Right lobe of liver (tissue), 6 donors: ENCODE measurements at regions of chr5 and their contacts with region 1.

Region 1: GRCh38 chr5:150523472-150524350 is 15.8 kb downstream of the NDST1 start:
- DNase-seq: peak in 1 of 3 donors; percentile 54
- ATAC-seq: peak; percentile 7 to 42 (median 11)
- H3K4me3 ChIP-seq: no peak overlapping the region
- H3K27ac ChIP-seq: peak overlapping the region; percentile 57 to 93 (median 58)
- H3K4me1 ChIP-seq: peaks cover 0 to 84% (median 51%) of the 10 kb centered on the region in 4 donors
- H3K27me3 ChIP-seq: no peaks in the 10 kb centered on the region
- CTCF ChIP-seq: peak; percentile 46 to 63 (median 52)
- POLR2A ChIP-seq: no peak

Region 2: DNA sequence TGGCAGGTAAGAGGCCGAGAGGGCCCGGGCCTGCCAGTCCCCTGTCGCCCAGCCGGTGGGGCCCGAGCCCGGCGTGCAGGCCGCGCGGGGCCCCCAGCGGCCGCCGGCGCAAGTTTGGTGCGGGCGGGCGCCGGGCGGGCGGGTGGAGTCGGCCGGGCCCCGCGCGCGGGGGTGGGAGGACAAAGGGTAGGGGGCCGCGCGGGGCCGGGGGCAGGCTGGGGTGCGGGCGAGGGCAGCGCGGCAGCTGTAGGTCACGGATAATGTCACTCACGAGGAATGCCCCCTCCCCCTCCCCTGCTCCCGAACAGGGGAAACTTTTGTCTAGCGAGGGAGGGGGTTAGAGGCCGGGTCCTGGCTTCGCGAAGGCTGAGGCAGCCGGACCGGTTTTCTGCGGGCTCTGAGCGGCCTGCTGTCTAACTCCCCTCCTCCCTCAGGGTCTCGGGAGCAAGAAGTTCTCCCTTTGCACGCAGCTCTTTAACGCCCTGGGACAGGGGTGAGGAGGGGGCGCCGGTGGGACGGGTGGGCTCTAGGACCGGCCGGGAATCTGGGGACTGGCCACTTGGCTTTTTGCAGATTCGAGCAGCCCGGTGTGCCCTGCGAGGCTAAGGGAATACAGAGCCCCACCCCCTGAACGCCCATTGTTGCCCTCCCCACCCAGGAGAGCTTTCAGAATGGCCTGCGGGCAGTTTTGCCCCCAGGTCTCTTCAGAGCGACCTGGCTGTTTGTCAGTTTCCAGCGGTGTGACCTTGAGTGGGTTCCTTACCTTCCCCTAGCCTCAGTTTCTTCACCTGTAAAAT is 37.1 kb before region 1 on chr5:
- intact Hi-C with region 1: loop called in 1 of 2 experiments (anchors 5 kb)
- DNase-seq: peak; percentile 73 to 79 (median 74)
- ATAC-seq: peak; percentile 15 to 35 (median 25)
- H3K4me3 ChIP-seq: peak overlapping the region; percentile 94 to 97 (median 96)
- H3K27ac ChIP-seq: peak overlapping the region; percentile 99 to 100 (median 100)
- H3K4me1 ChIP-seq: peaks cover 0 to 54% (median 25%) of the 10 kb centered on the region in 4 donors
- H3K27me3 ChIP-seq: no peaks in the 10 kb centered on the region
- CTCF ChIP-seq: peak in 1 of 4 donors; percentile 24
- POLR2A ChIP-seq: no peak